ENCODE measurements at regions of chr13 and their contacts with region 1.

Region 1: GRCh38 chr13:98173431-98174152 is 3.5 kb downstream of the RNF113B start:
- DNase-seq: no peak
- ATAC-seq: peak in 7 of 8 donors; percentile 57 to 81 (median 72)
- H3K4me3 ChIP-seq: no peak overlapping the region
- H3K27ac ChIP-seq: peak overlapping the region in 7 of 10 donors; percentile 25 to 74 (median 61)
- H3K4me1 ChIP-seq: peaks cover 6 to 47% (median 34%) of the 10 kb centered on the region in 9 donors
- H3K27me3 ChIP-seq: no peaks in the 10 kb centered on the region
- CTCF ChIP-seq: no peak

Region 2: DNA sequence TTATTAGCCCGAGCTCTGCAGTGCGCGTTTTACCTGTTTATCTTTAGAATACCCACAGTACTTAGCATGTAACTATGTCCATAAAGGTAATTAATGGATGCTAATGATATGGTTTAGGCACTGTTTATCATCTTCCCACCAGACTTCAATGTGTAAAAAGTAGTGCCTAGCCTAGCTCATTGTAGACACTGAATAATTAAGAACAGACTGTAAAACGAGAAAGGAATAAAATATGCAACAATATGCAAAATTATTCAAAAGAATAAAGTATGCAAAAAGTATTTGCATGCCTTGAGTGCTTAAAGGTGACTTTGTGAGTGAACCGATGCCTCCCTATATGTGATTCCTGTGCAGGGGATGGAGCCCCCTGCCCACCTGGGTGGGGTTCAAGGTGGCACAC is 39.2 kb after region 1 on chr13:
- intact Hi-C with region 1: loop called in 1 of 10 experiments (anchors 1 kb)
- DNase-seq: no peak
- ATAC-seq: no peak
- H3K4me3 ChIP-seq: no peak overlapping the region
- H3K27ac ChIP-seq: no peak overlapping the region
- H3K4me1 ChIP-seq: peaks cover 0 to 46% (median 19%) of the 10 kb centered on the region in 9 donors
- H3K27me3 ChIP-seq: no peaks in the 10 kb centered on the region
- CTCF ChIP-seq: no peak

Region 3: DNA sequence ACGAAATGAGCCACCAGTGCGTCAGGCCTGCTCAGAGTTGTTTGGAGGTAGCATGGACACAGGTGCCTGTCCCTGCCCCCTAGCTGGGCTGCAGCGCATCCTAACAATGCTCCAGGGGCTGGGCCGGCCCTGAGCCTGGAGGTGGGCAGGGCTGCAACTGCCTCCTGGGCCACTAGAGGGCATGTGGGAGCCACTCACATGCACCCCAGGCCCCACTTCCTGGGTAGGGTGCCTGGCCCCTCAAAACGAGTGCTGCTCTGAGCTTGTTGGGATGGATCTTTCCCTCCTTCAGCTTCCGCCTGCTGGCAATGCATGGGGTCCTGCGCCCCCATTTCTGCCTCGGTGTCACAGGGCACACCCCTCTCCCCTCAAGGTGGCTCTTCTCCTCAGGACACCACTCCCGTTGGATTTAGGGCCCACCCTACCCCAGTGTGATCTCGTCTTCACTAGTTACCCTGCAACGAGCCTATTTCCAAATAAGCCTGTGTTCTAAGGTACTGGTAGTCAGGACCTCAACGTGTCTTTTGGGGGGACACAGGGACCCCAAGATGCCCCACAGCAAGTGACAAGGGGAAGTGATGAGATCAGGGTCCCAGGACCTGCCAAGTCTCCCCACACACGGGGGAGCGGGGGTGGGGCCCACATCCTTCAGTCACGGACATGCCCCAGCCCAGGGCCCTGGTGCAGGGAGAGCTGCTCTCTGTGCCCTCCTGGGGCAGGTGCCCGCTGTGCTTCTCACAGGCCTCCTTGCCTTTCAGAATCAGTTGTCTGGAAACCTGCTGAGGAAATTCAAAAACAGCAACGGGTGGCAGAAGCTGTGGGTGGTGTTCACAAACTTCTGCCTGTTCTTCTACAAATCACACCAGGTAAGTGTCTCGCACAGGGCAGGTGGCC is 272.0 kb after region 1 on chr13:
- intact Hi-C with region 1: no loop called
- DNase-seq: peak; percentile 60 to 75
- ATAC-seq: peak; percentile 73 to 89 (median 81)
- H3K4me3 ChIP-seq: peak overlapping the region in 1 of 10 donors; percentile 4
- H3K27ac ChIP-seq: peak overlapping the region in 3 of 10 donors; percentile 19 to 46 (median 41)
- H3K4me1 ChIP-seq: peaks cover 4 to 35% (median 28%) of the 10 kb centered on the region in 9 donors
- H3K27me3 ChIP-seq: no peaks in the 10 kb centered on the region
- CTCF ChIP-seq: peak; percentile 90 to 99 (median 97)